ENCODE measurements at regions of chr14 and their contacts with region 1.

Region 1: GRCh38 chr14:39266871-39267591 is 33.3 kb downstream of the MIA2 start:
- DNase-seq: peak; percentile 91
- ATAC-seq: peak; percentile 96

Region 2: GRCh38 chr14:39181026-39181692 is 85.9 kb before region 1 on chr14:
- intact Hi-C with region 1: loop called (anchors 10 kb)
- DNase-seq: no peak
- ATAC-seq: no peak

Region 3: DNA sequence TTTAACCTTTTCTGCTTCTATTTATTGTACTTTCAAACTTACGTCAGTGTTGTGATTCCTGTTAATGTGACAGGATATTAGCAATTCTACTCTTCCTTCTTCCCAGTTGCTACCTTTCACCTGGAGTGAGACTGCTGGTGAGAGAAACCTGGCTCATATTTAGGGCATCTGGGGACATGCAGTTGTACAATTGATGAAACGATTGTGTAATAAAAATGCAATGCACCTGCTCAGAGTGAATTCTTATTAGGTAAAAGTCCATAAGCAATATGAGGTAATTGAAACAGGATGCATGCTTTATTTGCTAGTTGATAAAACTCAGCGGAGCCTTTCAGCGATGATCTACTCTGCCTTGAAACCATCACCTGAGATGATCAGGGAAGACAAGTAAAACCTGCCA is 281.3 kb after region 1 on chr14:
- intact Hi-C with region 1: no loop called
- DNase-seq: no peak
- ATAC-seq: no peak